HepG2 (cell line): ENCODE measurements at regions of chrX and their contacts with region 1.

Region 1: GRCh38 chrX:87664381-87664780 is 146.8 kb downstream of the KLHL4 start:
- DNase-seq: no peak
- ATAC-seq: no peak
- H3K4me3 ChIP-seq: no peak overlapping the region
- H3K27ac ChIP-seq: no peak overlapping the region
- H3K4me1 ChIP-seq: no peaks in the 10 kb centered on the region
- H3K27me3 ChIP-seq: no peaks in the 10 kb centered on the region
- CTCF ChIP-seq: peak; percentile 33
- EP300 ChIP-seq: no peak
- POLR2A ChIP-seq: no peak
- RAD21 ChIP-seq: no peak

Region 2: DNA sequence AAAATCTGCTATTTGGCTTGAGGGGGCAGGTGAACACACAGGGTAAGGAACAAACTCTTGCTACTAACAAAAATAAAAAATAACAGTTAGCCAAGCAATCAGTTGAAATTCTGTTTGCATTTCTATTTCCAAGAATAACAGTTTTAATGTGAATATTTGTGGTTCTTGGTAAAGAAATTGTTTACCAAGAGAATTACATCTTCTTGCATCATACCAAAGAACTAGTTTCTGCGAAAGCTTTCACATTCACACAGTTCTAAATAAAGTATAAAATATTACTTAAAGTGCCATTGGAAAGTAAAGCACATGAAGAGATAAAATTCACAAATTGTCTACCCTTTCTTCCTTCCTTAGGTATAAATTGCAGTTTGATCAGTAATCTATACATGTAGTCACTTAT is 92.4 kb before region 1 on chrX:
- CTCF ChIA-PET with region 1: no interaction called
- POLR2A ChIA-PET with region 1: no interaction called
- in situ Hi-C with region 1: no loop called
- intact Hi-C with region 1: no loop called
- DNase-seq: no peak
- ATAC-seq: no peak
- H3K4me3 ChIP-seq: no peak overlapping the region
- H3K27ac ChIP-seq: no peak overlapping the region
- H3K4me1 ChIP-seq: no peaks in the 10 kb centered on the region
- H3K27me3 ChIP-seq: no peaks in the 10 kb centered on the region
- CTCF ChIP-seq: no peak
- EP300 ChIP-seq: no peak
- POLR2A ChIP-seq: no peak
- RAD21 ChIP-seq: no peak

Region 3: DNA sequence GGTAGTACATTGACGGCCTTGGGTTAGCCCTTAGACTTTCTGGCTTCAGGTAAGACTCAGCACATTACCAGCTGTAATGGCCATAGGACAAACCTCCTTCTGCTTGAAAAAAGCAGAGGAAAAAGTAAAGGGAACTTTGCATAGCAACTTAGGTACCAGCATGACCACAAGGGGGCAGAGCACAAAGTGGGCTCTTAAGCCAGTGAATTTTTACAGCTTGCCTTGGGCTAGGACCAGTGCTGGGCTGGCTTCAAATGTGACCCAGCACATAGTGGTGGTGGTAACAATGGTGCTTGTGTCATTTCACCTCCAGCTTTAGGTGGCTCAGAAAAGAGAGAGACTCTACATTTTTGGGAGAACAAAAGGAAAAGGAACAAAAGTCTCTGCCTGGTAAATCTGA is 80.7 kb before region 1 on chrX:
- CTCF ChIA-PET with region 1: no interaction called
- POLR2A ChIA-PET with region 1: no interaction called
- in situ Hi-C with region 1: no loop called
- intact Hi-C with region 1: loop called (anchors 1 kb)
- DNase-seq: peak; percentile 3
- ATAC-seq: peak; percentile 60; the same call in 2 of the 3 replicates
- H3K4me3 ChIP-seq: no peak overlapping the region
- H3K27ac ChIP-seq: no peak overlapping the region
- H3K4me1 ChIP-seq: no peaks in the 10 kb centered on the region
- H3K27me3 ChIP-seq: no peaks in the 10 kb centered on the region
- CTCF ChIP-seq: peak; percentile 47
- EP300 ChIP-seq: no peak
- POLR2A ChIP-seq: no peak
- RAD21 ChIP-seq: no peak